ENCODE measurements at regions of chr10 and their contacts with region 1.

Region 1: GRCh38 chr10:47322300-47323061 is at the start of gene GDF2:
- DNase-seq: no peak
- H3K4me3 ChIP-seq: no peak within 1 kb of the TSS
- H3K27ac ChIP-seq: no peak within 1 kb of the TSS
- H3K4me1 ChIP-seq: no peaks in the 10 kb centered on the region
- H3K27me3 ChIP-seq: no peaks in the 10 kb centered on the region
- CTCF ChIP-seq: no peak
- total RNA-seq, gene GDF2: not detected

Region 2: DNA sequence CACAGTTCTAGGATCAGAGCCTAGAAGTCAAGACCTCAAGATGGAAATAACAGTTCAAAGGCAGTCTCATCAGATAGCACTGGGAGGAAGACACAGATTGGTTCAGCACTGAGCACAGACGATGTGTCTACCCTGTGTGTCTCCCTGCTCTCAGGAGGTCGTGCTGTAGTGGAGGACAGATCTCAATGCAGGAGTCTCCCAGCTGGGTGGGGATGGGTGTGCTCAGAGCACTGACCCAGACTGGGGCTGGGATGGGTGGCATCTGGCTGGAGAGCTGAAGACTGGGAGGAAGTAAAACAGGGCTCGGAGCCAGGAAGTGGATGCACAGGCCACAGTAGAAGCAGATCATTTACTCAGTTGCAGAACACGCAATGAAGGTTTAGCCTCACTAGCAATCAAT is 92.0 kb before region 1 on chr10:
- CTCF ChIA-PET with region 1: no interaction called
- dilution Hi-C with region 1: no loop called
- in situ Hi-C with region 1: no loop called
- intact Hi-C with region 1: no loop called
- DNase-seq: no peak
- H3K4me3 ChIP-seq: no peak overlapping the region
- H3K27ac ChIP-seq: no peak overlapping the region
- H3K4me1 ChIP-seq: no peaks in the 10 kb centered on the region
- H3K27me3 ChIP-seq: peaks cover 3% of the 10 kb centered on the region
- CTCF ChIP-seq: no peak

Region 3: GRCh38 chr10:47287365-47287802 is 35.1 kb before region 1 on chr10:
- CTCF ChIA-PET with region 1: no interaction called
- dilution Hi-C with region 1: loop called (anchors 5 kb)
- in situ Hi-C with region 1: no loop called
- intact Hi-C with region 1: no loop called
- DNase-seq: no peak
- H3K4me3 ChIP-seq: no peak overlapping the region
- H3K27ac ChIP-seq: no peak overlapping the region
- H3K4me1 ChIP-seq: no peaks in the 10 kb centered on the region
- H3K27me3 ChIP-seq: no peaks in the 10 kb centered on the region
- CTCF ChIP-seq: no peak

Region 4: GRCh38 chr10:47361293-47361692 is 38.8 kb after region 1 on chr10:
- CTCF ChIA-PET with region 1: no interaction called
- dilution Hi-C with region 1: loop called (anchors 5 kb)
- in situ Hi-C with region 1: no loop called
- intact Hi-C with region 1: no loop called
- DNase-seq: no peak
- H3K4me3 ChIP-seq: no peak overlapping the region
- H3K27ac ChIP-seq: no peak overlapping the region
- H3K4me1 ChIP-seq: peaks cover 4% of the 10 kb centered on the region
- H3K27me3 ChIP-seq: no peaks in the 10 kb centered on the region
- CTCF ChIP-seq: peak; percentile 94

Region 5: GRCh38 chr10:47421057-47421952 is 98.8 kb after region 1 on chr10:
- CTCF ChIA-PET with region 1: no interaction called
- dilution Hi-C with region 1: no loop called
- in situ Hi-C with region 1: no loop called
- intact Hi-C with region 1: no loop called
- DNase-seq: peak; percentile 74
- H3K4me3 ChIP-seq: no peak overlapping the region
- H3K27ac ChIP-seq: no peak overlapping the region
- H3K4me1 ChIP-seq: no peaks in the 10 kb centered on the region
- H3K27me3 ChIP-seq: no peaks in the 10 kb centered on the region
- CTCF ChIP-seq: no peak